Spleen (tissue), 13 donors: ENCODE measurements at regions of chr5 and their contacts with region 1.

Region 1: GRCh38 chr5:147554271-147554817 is 44.5 kb upstream of the DPYSL3 start:
- DNase-seq: no peak
- H3K4me3 ChIP-seq: no peak overlapping the region
- H3K27ac ChIP-seq: peak overlapping the region in 5 of 8 donors; percentile 30 to 52 (median 32)
- H3K4me1 ChIP-seq: no peaks in the 10 kb centered on the region
- H3K27me3 ChIP-seq: no peaks in the 10 kb centered on the region
- CTCF ChIP-seq: no peak
- POLR2A ChIP-seq: no peak

Region 2: GRCh38 chr5:147453875-147454814 is 100.2 kb before region 1 on chr5:
- intact Hi-C with region 1: loop called (anchors 5 kb)
- DNase-seq: peak; percentile 91
- H3K4me3 ChIP-seq: peak overlapping the region; percentile 45 to 80 (median 61)
- H3K27ac ChIP-seq: peak overlapping the region; percentile 48 to 84 (median 78)
- H3K4me1 ChIP-seq: peaks cover 0 to 40% (median 21%) of the 10 kb centered on the region in 6 donors
- H3K27me3 ChIP-seq: peaks cover 0 to 62% (median 19%) of the 10 kb centered on the region in 7 donors
- CTCF ChIP-seq: peak; percentile 67 to 98 (median 82)
- POLR2A ChIP-seq: no peak

Region 3: DNA sequence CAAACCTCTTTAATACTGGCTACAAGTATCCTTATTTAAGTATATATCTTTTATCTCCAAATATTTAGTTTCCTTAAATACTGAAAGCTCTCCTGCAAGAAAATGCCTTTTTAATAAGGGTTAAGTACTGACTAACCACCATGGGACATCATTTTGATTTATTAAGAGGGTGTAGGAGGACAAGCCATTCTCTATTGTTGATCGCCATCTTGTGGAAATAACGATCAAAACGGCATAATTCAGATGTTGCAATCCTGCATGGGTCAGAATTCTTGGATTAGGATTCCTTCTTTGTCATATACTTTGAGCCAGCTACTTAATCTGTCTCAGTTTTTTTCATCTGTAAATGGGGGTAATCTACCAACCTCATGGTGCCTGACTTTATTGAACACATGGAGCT is 380.7 kb after region 1 on chr5:
- intact Hi-C with region 1: no loop called
- DNase-seq: no peak
- H3K4me3 ChIP-seq: no peak overlapping the region
- H3K27ac ChIP-seq: no peak overlapping the region
- H3K4me1 ChIP-seq: no peaks in the 10 kb centered on the region
- H3K27me3 ChIP-seq: peaks cover 0 to 4% (median 0%) of the 10 kb centered on the region in 7 donors
- CTCF ChIP-seq: peak in 1 of 11 experiments; percentile 16
- POLR2A ChIP-seq: no peak